Activated CD4-positive, alpha-beta memory T cell treated with anti-CD3 and anti-CD28 coated beads, Interleukin-2, amount 10 ng/mL, durations not matched to agents 7 days and 5 days (primary cell): ENCODE measurements at regions of chr1 and their contacts with region 1.

Region 1: DNA sequence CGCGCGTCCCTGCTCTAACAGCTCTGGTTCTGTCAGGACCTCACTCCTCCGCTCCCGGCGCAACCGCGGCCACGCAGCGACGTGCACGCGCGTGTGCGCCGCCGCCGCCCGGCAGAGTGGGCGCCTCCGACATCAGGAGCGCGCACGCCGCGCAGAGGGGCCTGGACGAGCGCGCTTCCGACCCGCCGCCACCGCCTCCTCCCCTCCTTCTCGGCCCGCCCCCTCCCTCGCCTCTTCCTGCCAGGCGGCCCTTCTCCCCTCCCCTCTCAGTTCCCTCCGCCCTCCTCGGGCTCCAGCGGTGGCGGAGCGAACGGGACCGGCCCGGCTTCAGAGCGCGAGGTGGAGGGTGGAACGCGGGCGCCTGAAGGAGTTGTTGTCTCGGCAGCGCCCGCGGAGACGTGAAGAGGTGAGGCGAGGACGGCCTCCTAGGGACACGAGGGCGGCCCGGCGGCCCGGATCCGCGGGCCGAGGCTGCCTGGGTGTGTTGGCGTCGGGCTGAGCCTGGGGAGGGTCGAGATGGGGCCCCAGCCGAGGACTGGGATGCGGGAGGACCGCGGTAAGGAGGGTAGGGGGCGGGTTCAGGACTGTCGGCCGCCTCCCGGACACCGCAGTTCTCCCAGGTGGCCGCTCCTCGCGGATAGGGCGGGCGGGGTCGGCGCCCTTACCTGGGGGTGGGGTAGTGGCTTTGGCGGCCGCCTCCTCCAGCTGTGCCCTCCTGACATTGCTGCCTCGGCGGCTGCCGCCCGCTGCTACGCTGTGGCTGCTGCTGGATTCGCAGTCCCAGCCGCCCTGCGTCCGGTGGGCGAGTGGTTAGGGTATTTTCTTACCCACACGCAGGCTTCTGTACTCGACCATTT is at the start of gene RABGAP1L:
- DNase-seq: peak; percentile 95
- H3K4me3 Mint-ChIP-seq: peak within 1 kb of the TSS; percentile 84
- H3K27ac Mint-ChIP-seq: peak within 1 kb of the TSS; percentile 93
- H3K4me1 Mint-ChIP-seq: peaks cover 60% of the 10 kb centered on the region
- H3K27me3 Mint-ChIP-seq: no peaks in the 10 kb centered on the region
- total RNA-seq, gene RABGAP1L: 76.8 to 80.5 TPM

Region 2: DNA sequence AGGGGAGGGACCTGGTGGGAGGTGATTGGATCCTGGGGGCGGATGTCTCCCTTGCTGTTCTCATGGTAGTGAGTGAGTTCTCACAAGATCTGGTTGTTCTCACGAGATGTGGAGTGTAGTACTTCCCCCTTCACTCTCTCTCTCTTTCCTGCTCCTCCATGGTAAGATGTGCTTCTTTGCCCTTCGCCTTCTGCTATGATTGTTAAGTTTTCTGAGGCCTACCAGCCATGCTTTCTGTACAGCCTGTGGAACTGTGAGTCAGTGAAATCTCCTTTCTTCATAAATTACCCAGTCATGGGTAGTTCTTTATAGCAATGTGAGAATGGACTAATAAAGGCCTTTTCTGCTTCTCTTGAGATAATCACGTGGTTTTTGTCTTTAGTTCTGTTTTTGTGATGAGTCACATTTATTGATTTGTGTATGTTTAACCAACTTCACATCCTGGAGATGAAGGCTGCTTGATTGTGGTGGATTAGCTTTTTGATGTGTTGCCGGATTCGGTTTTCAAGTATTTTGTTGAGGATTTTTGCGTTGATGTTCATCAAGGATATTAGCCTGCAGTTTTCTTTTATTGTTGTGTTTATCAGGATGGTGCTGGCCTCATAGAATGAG is 45.3 kb after region 1 on chr1:
- CTCF ChIA-PET with region 1: no interaction called
- POLR2A ChIA-PET with region 1: interaction called, 13 read pairs
- DNase-seq: no peak
- H3K4me3 Mint-ChIP-seq: peak overlapping the region; percentile 36
- H3K27ac Mint-ChIP-seq: peak overlapping the region; percentile 76
- H3K4me1 Mint-ChIP-seq: peaks cover 44% of the 10 kb centered on the region
- H3K27me3 Mint-ChIP-seq: no peaks in the 10 kb centered on the region